AG04450 (cell line): ENCODE measurements at regions of chr19 and their contacts with region 1.

Region 1: DNA sequence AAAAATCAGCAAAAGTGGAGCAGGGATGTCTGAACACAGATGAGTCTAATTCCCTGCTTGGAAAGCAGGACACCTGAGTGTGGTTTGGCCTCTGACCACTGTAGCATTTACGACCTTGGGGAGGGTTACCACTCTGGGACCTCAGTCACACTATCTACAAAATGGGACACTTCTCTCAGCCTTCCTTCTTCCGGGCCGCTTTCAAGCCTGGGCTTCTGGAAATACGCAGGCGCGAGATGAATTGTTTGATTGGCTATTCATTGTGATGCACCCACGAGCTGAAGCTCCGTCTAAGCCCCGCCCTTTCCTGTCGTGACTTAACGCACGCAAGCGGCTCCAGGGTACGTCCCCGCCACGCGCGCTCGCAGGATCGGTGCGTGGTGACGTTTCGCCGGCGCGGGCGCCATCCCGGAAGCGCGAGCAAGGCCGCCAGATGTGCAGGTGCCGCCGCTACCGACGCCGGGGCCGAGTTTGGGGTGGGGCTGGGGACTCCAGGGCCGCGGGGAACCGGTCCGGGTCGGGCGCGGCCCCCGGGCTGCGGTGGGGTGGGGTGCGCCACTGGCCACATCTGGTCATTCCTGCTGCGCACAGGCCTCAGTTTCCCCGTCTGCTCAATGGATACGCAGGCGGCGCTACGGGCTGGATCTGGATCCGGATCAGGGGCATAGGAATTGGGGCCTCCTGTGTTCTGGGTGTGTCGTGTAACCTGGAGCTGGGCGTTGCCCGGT is at the start of gene KXD1:
- DNase-seq: peak; percentile 98
- H3K4me3 ChIP-seq: peak within 1 kb of the TSS; percentile 99
- H3K27ac ChIP-seq: peak within 1 kb of the TSS; percentile 57
- H3K27me3 ChIP-seq: no peaks in the 10 kb centered on the region
- CTCF ChIP-seq: no peak
- polyA plus RNA-seq, gene KXD1: 77.3 and 104 TPM in 2 replicates

Region 2: DNA sequence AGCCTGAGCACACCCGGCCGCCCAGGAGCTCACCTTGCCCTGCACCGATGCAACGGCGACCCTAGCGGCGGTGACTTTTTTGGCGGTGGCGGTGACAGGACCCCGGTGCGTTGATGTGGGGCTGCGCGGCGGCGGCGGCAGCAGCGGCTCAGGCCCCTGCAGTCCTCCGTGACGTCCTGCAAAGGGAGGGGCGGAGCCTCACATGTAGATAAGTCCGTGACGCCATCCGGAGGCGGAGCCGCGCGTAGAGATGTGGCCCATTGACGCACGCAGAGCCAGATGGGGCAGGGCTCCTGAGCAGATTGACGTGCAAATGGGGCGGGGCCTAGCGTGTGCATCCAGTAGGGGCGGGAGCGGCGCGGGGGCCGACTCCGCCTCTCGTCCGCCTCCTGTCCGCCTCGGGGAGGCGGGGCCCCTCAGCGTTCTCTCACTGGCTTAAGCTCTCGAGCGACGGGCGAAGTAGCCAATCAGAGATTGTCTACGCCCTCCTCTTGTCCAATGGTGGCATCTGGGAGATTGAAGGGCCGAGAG is 353.7 kb before region 1 on chr19 and contains the start of gene RAB3A:
- CTCF ChIA-PET with region 1: no interaction called
- POLR2A ChIA-PET with region 1: no interaction called
- DNase-seq: peak; percentile 100
- H3K4me3 ChIP-seq: peak within 1 kb of the TSS; percentile 93
- H3K27ac ChIP-seq: peak within 1 kb of the TSS; percentile 100
- H3K27me3 ChIP-seq: no peaks in the 10 kb centered on the region
- CTCF ChIP-seq: no peak
- polyA plus RNA-seq, gene RAB3A: 2.8 and 6.1 TPM in 2 replicates

Region 3: DNA sequence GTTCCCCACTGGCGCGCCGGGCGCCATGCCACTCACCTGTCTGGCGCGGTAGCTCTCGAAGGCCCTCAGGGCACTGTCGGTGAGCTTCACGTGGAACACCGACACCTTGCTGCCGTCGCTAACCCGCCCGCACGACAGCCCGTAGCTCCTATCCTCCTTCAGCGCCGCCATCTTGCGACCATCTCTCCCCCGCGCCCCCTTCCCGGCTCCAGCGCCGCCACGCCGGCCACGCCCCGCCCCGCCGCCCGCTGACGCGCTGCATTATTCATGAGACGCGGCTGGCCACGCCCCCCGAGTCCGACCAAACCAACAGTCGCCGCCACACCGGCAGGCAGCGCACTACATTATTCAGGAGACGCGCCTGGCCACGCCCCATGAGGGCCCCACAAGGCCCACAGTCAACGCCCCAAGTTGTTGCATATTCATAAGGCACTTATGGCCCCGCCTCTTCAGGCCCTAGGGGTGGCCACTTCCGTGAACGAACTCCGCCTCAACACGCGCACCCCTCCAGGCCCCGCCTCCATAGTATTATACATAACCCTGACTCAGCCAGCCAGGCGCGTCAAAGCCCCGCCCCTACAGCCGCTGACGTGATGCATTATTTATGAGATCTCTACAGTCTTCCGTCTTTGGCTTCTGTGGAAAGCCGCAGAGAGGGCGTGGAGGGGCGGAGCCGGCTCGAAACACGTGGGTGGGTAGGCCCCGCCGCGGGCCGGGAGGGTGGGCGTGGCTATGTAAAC is 35.6 kb before region 1 on chr19 and contains the start of gene ELL:
- CTCF ChIA-PET with region 1: interaction called, 3 read pairs
- POLR2A ChIA-PET with region 1: interaction called, 21 read pairs
- DNase-seq: peak; percentile 100
- H3K4me3 ChIP-seq: peak within 1 kb of the TSS; percentile 94
- H3K27ac ChIP-seq: peak within 1 kb of the TSS; percentile 99
- H3K27me3 ChIP-seq: no peaks in the 10 kb centered on the region
- CTCF ChIP-seq: peak; percentile 22
- polyA plus RNA-seq, gene ELL: 2.7 and 4.1 TPM in 2 replicates

Region 4: DNA sequence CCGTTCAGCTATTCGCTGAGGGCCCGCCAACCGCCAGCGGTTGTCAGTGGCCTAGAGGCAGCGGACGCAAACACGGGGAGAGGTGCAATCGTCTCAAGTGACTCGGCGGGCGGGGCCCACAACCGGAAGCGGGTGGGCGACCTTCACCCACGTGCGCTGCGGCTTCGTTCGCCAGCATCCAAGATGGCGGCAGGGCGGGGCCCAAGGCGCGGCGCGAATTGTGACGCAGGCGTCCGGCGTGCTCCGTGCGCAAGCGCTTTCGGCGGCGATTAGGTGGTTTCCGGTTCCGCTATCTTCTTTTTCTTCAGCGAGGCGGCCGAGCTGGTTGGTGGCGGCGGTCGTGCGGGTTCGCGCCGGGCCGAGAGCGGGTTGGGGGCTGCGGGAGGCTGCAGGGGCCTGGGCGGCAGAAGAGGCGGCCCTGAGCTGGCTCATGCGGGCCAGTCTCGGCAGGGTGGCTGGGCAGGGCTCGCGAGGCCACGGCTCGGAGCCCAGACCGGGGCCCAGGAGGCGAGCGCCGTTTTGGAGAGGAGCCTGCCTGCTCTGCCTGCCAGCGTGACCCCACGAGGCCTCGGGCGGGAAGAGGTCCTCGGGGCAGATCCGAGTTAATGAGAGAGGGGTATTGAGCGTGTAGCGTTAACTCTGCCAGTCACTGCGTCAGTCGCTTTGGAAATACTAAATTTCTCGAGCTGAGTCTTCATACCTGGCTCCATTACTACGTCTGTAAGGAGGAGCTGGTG is 14.1 kb after region 1 on chr19 and contains the start of gene UBA52:
- CTCF ChIA-PET with region 1: no interaction called
- POLR2A ChIA-PET with region 1: interaction called, 10 read pairs
- DNase-seq: peak; percentile 91
- H3K4me3 ChIP-seq: peak within 1 kb of the TSS; percentile 98
- H3K27ac ChIP-seq: peak within 1 kb of the TSS; percentile 83
- H3K27me3 ChIP-seq: no peaks in the 10 kb centered on the region
- CTCF ChIP-seq: no peak
- polyA plus RNA-seq, gene UBA52: 1,723 and 2,315 TPM in 2 replicates

Region 5: DNA sequence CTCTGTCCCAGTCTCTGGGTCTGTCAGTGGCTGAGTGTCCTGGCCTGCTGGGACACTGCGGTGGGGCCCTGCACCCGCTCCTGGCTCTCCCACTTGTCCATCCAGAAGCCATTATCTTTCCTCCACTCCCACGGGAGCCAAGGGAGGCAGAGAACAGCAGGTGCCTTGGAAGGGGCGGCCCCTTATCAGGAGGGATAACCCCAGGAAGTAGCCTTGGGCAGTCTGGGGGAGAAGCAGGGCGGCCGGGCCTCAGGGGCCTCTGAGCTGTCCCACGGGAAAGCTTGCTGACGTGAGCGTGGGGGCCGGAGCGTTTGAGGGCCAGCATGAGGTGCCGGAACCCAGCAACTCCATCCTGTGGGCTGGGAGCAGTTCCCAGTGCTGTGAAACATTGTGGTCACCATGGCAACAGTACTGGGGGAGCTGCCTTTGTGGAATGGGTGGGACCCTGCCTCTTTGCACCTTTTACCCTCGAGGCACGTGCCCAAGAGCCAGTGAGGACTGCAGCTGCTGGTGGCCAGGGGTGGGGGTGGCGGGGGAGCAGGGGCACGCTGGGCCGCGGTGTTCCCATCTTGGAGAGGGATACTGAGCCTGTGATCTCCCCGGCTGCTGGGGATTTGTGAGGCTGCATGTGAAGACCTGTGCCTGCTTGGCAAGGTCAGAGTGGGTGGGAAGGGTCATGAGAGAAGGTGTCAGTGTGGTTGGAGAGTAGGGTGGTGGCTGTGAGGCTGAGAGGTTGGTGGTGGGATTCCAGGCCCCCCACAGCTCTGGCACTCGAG is 100.1 kb after region 1 on chr19:
- CTCF ChIA-PET with region 1: interaction called, 10 read pairs
- POLR2A ChIA-PET with region 1: interaction called, 3 read pairs
- DNase-seq: peak; percentile 45
- H3K4me3 ChIP-seq: no peak overlapping the region
- H3K27ac ChIP-seq: no peak overlapping the region
- H3K27me3 ChIP-seq: no peaks in the 10 kb centered on the region
- CTCF ChIP-seq: no peak